ENCODE measurements at regions of chr1 and their contacts with region 1.

Region 1: GRCh38 chr1:22976461-22977243 is 4.0 kb upstream of the LACTBL1 start:
- DNase-seq: peak; percentile 70 to 74
- H3K4me3 ChIP-seq: no peak overlapping the region
- H3K27ac ChIP-seq: peak overlapping the region; percentile 37; the same call in 1 of the 2 replicates
- H3K4me1 ChIP-seq: peaks cover 49% of the 10 kb centered on the region
- H3K27me3 ChIP-seq: no peaks in the 10 kb centered on the region
- CTCF ChIP-seq: peak; percentile 91

Region 2: GRCh38 chr1:23081376-23081775 is 104.7 kb after region 1 on chr1:
- CTCF ChIA-PET with region 1: no interaction called
- POLR2A ChIA-PET with region 1: interaction called, 3 read pairs
- intact Hi-C with region 1: loop called (anchors 5 kb)
- DNase-seq: no peak
- H3K4me3 ChIP-seq: no peak overlapping the region
- H3K27ac ChIP-seq: no peak overlapping the region
- H3K4me1 ChIP-seq: no peaks in the 10 kb centered on the region
- H3K27me3 ChIP-seq: no peaks in the 10 kb centered on the region
- CTCF ChIP-seq: peak; percentile 53

Region 3: GRCh38 chr1:23184212-23184934 is 207.7 kb after region 1 on chr1:
- CTCF ChIA-PET with region 1: no interaction called
- POLR2A ChIA-PET with region 1: no interaction called
- intact Hi-C with region 1: loop called (anchors 1 kb)
- DNase-seq: no peak
- H3K4me3 ChIP-seq: no peak overlapping the region
- H3K27ac ChIP-seq: no peak overlapping the region
- H3K4me1 ChIP-seq: peaks cover 20% of the 10 kb centered on the region
- H3K27me3 ChIP-seq: no peaks in the 10 kb centered on the region
- CTCF ChIP-seq: peak; percentile 91

Region 4: DNA sequence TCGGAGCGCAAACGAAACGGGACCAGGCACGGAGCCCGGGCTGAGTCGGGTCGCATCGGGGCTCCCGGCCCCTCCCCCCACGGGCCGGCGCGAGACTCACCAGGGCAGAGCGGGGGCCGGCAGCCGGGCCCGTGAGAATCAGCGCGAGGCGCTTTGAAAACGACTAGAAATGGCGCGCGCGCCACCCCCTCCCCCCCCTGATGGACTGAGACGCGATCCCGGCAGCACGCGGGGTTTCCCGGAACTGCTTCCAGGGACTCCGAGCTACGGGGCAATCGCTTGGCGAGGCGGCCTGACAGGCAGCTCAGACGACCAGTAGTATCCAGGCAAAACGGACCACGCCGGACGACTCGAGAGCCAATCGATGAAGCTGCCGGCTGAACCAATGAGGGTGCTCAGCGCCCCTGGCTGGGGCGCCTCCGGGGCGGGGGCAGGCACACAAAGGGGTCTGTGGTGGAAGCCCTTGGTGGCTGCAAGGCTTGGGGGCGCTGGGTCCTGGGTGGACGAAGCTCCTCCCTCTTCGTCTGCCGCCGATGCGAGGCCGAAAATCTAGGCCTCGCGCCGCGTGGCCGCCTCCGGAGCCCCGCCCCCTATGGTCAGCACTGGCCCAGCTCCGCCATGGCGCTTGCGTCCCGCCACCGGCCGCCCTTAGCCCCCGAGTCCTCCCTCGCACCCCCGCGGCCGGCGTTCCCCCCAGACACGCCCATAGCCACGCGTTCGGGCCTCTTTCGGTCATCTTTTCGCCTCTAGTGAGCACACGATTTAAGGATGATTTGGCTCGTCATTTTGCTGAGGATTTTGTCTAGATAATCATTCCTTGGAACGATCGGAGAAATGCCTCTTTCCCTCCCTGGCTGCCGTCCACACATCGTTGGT is 367.7 kb after region 1 on chr1 and contains the start of gene HNRNPR:
- CTCF ChIA-PET with region 1: no interaction called
- POLR2A ChIA-PET with region 1: interaction called, 13 read pairs
- intact Hi-C with region 1: no loop called
- DNase-seq: peak; percentile 96 to 99
- H3K4me3 ChIP-seq: peak within 1 kb of the TSS; percentile 68
- H3K27ac ChIP-seq: peak within 1 kb of the TSS; percentile 81
- H3K4me1 ChIP-seq: peaks cover 39% of the 10 kb centered on the region
- H3K27me3 ChIP-seq: no peaks in the 10 kb centered on the region
- CTCF ChIP-seq: no peak
- total RNA-seq, gene HNRNPR: 149 and 198 TPM in 2 replicates

Region 5: DNA sequence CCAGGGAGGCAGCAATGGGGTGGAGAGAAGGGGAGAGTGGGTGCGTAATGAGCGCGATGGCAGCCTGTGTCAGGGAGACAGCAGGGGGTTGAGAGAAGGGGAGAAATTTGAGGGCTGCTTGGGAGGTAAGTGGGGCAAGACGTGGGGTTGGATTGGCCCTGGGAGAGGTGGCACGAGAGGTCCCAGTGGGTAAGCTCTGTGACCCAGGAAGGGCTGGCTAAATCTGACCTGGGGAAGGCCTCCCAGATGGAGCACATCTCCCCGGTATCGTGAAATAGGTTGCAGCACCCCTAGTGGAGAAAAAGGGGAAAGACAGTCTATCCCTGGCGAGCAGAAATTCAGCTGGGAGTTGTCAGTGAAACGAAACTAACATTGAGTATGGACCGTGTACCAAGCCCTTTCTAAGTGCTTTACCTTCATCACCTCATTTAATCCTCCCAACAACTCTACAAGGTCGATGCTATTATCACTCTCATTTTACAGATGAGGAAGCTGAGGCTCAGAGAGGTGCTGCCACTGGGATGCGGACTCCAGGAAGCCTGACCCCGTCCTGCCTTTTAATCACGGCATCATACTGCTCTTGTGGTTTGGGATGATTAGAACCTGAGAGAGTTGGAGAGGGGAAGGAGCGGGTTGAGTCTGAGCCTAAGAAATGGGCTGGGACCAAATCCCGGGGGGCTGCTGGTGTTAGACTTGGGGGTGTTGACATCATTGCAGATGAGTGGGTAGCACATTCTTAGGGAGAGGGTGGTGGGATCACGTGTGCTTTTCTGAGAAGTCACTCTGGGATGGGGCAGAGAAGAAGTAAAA is 658.4 kb after region 1 on chr1:
- CTCF ChIA-PET with region 1: no interaction called
- POLR2A ChIA-PET with region 1: no interaction called
- intact Hi-C with region 1: loop called (anchors 5 kb)
- DNase-seq: peak; percentile 59 to 62
- H3K4me3 ChIP-seq: peak overlapping the region; percentile 54; the same call in 1 of the 2 replicates
- H3K27ac ChIP-seq: peak overlapping the region; percentile 30; the same call in 1 of the 2 replicates
- H3K4me1 ChIP-seq: no peaks in the 10 kb centered on the region
- H3K27me3 ChIP-seq: no peaks in the 10 kb centered on the region
- CTCF ChIP-seq: peak; percentile 80

Measured in PC-9 (cell line).